ENCODE measurements at regions of chr1 and their contacts with region 1.

Region 1: GRCh38 chr1:117758444-117759316 is 152.8 kb downstream of the TENT5C start:
- DNase-seq: peak; percentile 83
- ATAC-seq: peak; percentile 96
- H3K4me3 ChIP-seq: peak overlapping the region; percentile 37
- H3K27ac ChIP-seq: peak overlapping the region; percentile 27
- H3K4me1 ChIP-seq: peaks cover 10% of the 10 kb centered on the region
- H3K27me3 ChIP-seq: no peaks in the 10 kb centered on the region
- CTCF ChIP-seq: peak; percentile 85
- POLR2A ChIP-seq: no peak
- RAD21 ChIP-seq: peak; percentile 79

Region 2: GRCh38 chr1:117059678-117060440 is 698.8 kb before region 1 on chr1 and contains the start of gene TTF2:
- CTCF ChIA-PET with region 1: no interaction called
- POLR2A ChIA-PET with region 1: no interaction called
- dilution Hi-C with region 1: no loop called
- in situ Hi-C with region 1: no loop called
- intact Hi-C with region 1: loop called (anchors 10 kb)
- DNase-seq: peak; percentile 98
- ATAC-seq: peak; percentile 98
- H3K4me3 ChIP-seq: peak within 1 kb of the TSS; percentile 64
- H3K27ac ChIP-seq: peak within 1 kb of the TSS; percentile 31; the same call in 1 of the 2 replicates
- H3K4me1 ChIP-seq: no peaks in the 10 kb centered on the region; the same call in 1 of the 2 replicates
- H3K27me3 ChIP-seq: no peaks in the 10 kb centered on the region
- CTCF ChIP-seq: no peak
- POLR2A ChIP-seq: peak; percentile 71; the same call in 1 of the 2 replicates
- RAD21 ChIP-seq: no peak
- total RNA-seq, gene TTF2: 12.5 and 14.7 TPM in 2 replicates

Region 3: GRCh38 chr1:117312225-117313138 is 446.2 kb before region 1 on chr1:
- CTCF ChIA-PET with region 1: interaction called, 3 read pairs
- POLR2A ChIA-PET with region 1: no interaction called
- dilution Hi-C with region 1: no loop called
- in situ Hi-C with region 1: no loop called
- intact Hi-C with region 1: loop called (anchors 10 kb)
- DNase-seq: peak; percentile 83
- ATAC-seq: peak; percentile 96
- H3K4me3 ChIP-seq: no peak overlapping the region
- H3K27ac ChIP-seq: peak overlapping the region; percentile 55; the same call in 1 of the 2 replicates
- H3K4me1 ChIP-seq: peaks cover 2% of the 10 kb centered on the region
- H3K27me3 ChIP-seq: peaks cover 2% of the 10 kb centered on the region; the same call in 1 of the 2 replicates
- CTCF ChIP-seq: peak; percentile 67
- POLR2A ChIP-seq: no peak
- RAD21 ChIP-seq: peak; percentile 49

Region 4: DNA sequence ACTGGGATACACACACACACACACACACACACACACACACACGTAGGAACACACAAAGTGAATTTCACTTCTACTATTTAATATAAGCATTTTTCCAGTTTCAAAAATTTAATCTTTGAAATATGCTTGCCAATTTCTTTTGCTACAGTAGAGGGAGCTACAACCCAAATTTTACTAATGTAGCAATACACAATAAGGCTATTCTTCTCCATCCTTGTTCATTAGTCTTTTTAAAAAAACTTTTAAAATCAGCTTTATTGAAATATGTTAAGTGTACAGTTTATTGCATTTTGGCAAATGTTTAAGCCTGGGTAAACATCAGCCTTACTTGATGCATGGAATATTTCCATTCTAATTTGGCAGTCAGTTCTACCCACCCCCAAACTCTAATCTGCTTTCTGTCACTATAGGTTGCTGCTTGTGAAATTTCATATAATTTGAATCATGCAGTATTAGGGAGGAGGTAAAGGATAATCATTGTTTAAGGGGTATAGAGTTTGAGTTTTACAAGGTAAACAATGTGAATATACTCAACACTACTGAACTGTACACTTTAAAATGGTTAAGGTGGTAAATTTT is 245.8 kb before region 1 on chr1:
- CTCF ChIA-PET with region 1: interaction called, 7 read pairs
- POLR2A ChIA-PET with region 1: interaction called, 3 read pairs
- dilution Hi-C with region 1: no loop called
- in situ Hi-C with region 1: no loop called
- intact Hi-C with region 1: loop called (anchors 1 kb)
- DNase-seq: peak; percentile 40
- ATAC-seq: peak; percentile 72
- H3K4me3 ChIP-seq: no peak overlapping the region
- H3K27ac ChIP-seq: no peak overlapping the region
- H3K4me1 ChIP-seq: no peaks in the 10 kb centered on the region
- H3K27me3 ChIP-seq: no peaks in the 10 kb centered on the region
- CTCF ChIP-seq: peak; percentile 84
- POLR2A ChIP-seq: no peak
- RAD21 ChIP-seq: peak; percentile 77

Region 5: DNA sequence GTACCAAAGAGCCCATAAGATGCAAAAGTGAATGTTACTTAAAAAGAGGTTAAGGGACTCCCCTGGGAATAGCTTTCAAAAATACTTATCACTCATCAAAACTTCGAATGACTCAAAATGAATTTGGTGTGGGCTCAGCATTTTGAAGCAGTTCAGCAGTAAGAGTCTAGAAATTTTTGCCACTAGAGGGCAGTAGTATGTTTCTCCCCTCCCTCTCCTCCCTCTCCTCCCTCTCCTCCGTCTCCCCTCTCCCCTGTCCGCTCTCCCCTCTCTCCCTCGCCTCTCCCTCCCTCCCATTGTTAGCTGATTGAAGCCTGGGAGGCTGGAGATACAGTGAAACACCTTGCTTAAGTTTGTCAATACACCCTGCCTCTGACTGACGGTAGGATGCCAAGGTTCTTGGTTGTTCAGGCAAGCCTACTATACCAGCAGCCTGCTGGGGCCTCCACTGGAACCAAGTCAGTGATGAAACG is 223.6 kb before region 1 on chr1:
- CTCF ChIA-PET with region 1: interaction called, 17 read pairs
- POLR2A ChIA-PET with region 1: no interaction called
- dilution Hi-C with region 1: no loop called
- in situ Hi-C with region 1: no loop called
- intact Hi-C with region 1: loop called (anchors 5 kb)
- DNase-seq: peak; percentile 72
- ATAC-seq: peak; percentile 83
- H3K4me3 ChIP-seq: no peak overlapping the region; the same call in 1 of the 2 replicates
- H3K27ac ChIP-seq: no peak overlapping the region
- H3K4me1 ChIP-seq: no peaks in the 10 kb centered on the region
- H3K27me3 ChIP-seq: no peaks in the 10 kb centered on the region
- CTCF ChIP-seq: peak; percentile 69
- POLR2A ChIP-seq: no peak
- RAD21 ChIP-seq: peak; percentile 64

Region 6: DNA sequence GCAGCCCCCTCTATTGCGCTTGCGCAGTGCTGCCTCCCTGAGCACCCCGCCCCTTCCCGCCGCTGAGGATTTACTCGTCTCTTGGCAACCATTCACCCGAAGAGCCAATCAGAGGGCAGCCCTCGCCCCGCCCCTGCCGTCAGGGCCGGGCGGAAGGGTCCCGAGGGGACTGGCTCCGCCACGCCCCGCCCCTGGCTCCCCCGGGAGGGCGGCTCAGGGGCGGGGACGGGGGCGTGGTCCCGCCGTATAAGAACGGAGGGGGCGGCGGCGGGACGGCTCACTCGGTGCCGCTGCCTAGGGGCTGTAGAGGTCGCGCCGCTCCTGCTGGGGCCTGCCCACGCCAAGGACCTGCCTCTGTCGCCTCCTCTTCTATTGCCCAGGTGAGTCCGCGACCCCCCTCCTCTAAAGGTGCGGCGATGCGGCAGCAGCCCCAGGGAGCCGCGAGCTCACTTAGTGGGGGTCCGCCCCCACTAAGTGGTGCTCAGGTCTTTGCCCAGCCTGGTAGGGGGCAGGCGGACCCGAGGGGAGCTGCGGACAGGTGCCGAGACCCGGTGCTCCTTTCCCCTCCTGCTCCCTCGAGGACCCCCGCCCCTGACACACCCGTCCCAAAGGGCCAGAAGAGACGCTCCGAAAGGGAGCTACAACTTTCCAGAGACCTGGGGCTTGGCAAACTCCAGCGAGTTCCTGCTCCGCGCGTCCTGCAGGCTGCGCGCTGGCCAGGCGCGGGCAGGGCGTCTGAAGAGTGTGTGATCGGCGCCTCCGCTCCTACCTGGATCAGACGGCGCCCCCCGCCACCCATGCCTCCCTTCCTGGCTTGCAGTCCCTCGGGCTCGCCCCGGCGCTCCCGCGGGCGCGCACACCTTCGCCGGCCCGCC is 152.7 kb before region 1 on chr1 and contains the start of gene TENT5C:
- CTCF ChIA-PET with region 1: interaction called, 7 read pairs
- POLR2A ChIA-PET with region 1: no interaction called
- dilution Hi-C with region 1: no loop called
- in situ Hi-C with region 1: loop called (anchors 10 kb)
- intact Hi-C with region 1: loop called (anchors 2 kb)
- DNase-seq: peak; percentile 95
- ATAC-seq: peak; percentile 98
- H3K4me3 ChIP-seq: peak within 1 kb of the TSS; percentile 84
- H3K27ac ChIP-seq: peak within 1 kb of the TSS; percentile 47
- H3K4me1 ChIP-seq: peaks cover 5% of the 10 kb centered on the region; the same call in 1 of the 2 replicates
- H3K27me3 ChIP-seq: 0 out of 2 replicates have a peak, but pooled peaks cover 2% of the 10 kb centered on the region
- CTCF ChIP-seq: no peak
- POLR2A ChIP-seq: peak; percentile 96
- RAD21 ChIP-seq: no peak
- total RNA-seq, gene TENT5C: 4.1 and 5.3 TPM in 2 replicates